ENCODE measurements at regions of chr4 and their contacts with region 1.

Region 1: DNA sequence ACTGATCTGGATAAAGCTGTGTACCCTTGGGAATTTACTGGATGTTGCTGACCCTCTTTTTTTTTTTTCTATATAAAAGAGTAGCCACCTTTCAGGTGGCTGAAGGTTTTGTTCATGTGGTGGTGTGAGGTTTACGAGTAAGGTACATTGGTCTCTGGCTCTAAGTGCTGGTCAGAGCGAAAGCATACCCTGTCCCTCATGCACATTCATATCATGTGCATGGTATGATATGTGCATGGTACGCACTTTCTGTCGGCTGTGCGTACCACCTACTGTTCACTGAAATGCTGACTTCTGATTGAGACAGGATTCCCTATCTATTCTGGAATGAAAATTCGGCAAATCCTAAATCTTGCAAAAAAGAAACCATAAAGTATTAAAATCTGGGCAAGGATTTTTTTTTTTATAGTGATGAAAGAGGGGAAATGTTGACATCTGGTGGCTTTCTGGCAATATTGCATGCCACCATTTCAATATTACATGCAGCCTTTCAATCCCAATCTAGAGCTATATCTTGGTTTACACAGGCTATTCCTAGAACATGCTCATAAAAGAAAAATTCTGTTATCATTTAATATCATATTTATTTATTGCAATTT is 32.8 kb downstream of the FAM149A start:
- DNase-seq: no peak

Region 2: GRCh38 chr4:186067757-186068385 is 69.4 kb before region 1 on chr4:
- intact Hi-C with region 1: loop called (anchors 2 kb)
- DNase-seq: peak in 6 of 10 donors; percentile 26 to 90 (median 57)

Region 3: GRCh38 chr4:186240848-186241491 is 103.7 kb after region 1 on chr4:
- intact Hi-C with region 1: no loop called
- DNase-seq: no peak

Measured in posterior cingulate gyrus (tissue), 11 donors.